ENCODE measurements at regions of chr1 and their contacts with region 1.

Region 1: GRCh38 chr1:221263831-221264767 is 384.9 kb downstream of the HLX start:
- DNase-seq: peak; percentile 9 to 57
- H3K4me3 ChIP-seq: no peak overlapping the region
- H3K27ac ChIP-seq: no peak overlapping the region
- H3K4me1 ChIP-seq: peaks cover 0 to 2% (median 0%) of the 10 kb centered on the region in 4 experiments; a peak in 1 of 7 replicates
- H3K27me3 ChIP-seq: no peaks in the 10 kb centered on the region
- CTCF ChIP-seq: peak in 2 of 3 experiments; percentile 64 to 68; a peak in 3 of 4 replicates
- EP300 ChIP-seq: no peak
- POLR2A ChIP-seq: no peak
- RAD21 ChIP-seq: peak; percentile 71 to 72

Region 2: GRCh38 chr1:221212926-221213325 is 51.2 kb before region 1 on chr1:
- CTCF ChIA-PET with region 1: no interaction called
- POLR2A ChIA-PET with region 1: no interaction called
- DNase-seq: no peak
- H3K4me3 ChIP-seq: no peak overlapping the region
- H3K27ac ChIP-seq: no peak overlapping the region
- H3K4me1 ChIP-seq: no peaks in the 10 kb centered on the region
- H3K27me3 ChIP-seq: no peaks in the 10 kb centered on the region
- CTCF ChIP-seq: no peak
- EP300 ChIP-seq: no peak
- POLR2A ChIP-seq: no peak
- RAD21 ChIP-seq: no peak

Region 3: GRCh38 chr1:221286399-221286798 is 22.3 kb after region 1 on chr1:
- CTCF ChIA-PET with region 1: interaction called, 10 read pairs
- POLR2A ChIA-PET with region 1: no interaction called
- DNase-seq: no peak
- H3K4me3 ChIP-seq: no peak overlapping the region
- H3K27ac ChIP-seq: no peak overlapping the region
- H3K4me1 ChIP-seq: peaks cover 0 to 4% (median 0%) of the 10 kb centered on the region in 4 experiments; a peak in 1 of 7 replicates
- H3K27me3 ChIP-seq: no peaks in the 10 kb centered on the region
- CTCF ChIP-seq: no peak
- EP300 ChIP-seq: no peak
- POLR2A ChIP-seq: no peak
- RAD21 ChIP-seq: no peak